ENCODE measurements at regions of chr6 and their contacts with region 1.

Region 1: GRCh38 chr6:37149745-37150144 is 20.2 kb upstream of the PIM1 start:
- DNase-seq: no peak
- H3K4me3 ChIP-seq: no peak overlapping the region
- H3K27ac ChIP-seq: no peak overlapping the region
- H3K27me3 ChIP-seq: no peaks in the 10 kb centered on the region
- CTCF ChIP-seq: no peak

Region 2: DNA sequence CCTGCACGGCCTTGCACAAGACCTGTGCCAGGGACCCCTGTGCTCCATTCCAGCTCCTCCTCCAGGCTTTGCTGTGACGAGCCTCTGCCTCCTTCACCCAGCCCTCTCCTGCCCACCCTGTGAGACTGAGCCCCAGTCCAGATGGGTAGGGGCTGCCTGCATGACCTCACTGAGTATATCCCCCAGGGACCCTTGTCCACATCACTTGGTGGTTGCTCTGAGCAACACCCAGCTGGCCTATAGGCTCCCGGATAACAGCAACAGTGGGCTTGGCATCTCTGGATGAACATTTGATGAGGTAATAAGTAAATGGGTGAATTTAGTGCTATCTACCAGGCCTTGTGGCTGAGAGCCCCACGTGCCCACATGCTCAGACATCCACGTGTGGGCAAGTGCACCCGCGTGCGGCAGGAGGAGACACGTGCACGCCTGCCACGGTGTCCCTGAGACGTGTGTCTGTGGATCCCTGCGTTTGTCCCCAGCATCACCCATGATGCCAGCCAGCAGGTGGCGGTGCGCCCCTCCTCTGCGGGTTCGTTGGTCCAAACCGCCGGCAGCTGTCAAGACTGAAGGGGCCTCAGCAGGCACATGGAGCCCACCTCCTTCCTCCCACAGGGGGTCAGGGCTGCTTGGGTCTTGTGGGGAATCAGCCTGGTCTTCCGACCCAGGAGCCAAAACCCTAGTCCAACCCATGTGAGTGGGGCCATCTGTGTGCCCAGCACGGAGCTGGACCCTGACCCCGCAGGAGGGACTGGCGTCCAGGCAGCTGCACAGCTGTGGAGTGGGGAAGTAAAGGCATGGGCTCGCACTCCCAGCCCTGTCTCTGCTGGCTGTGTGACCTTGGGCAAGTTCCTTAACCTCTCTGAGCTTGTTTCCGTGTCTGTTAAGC is 98.4 kb before region 1 on chr6:
- intact Hi-C with region 1: no loop called
- DNase-seq: peak; percentile 81 to 96 (median 94)
- H3K4me3 ChIP-seq: peak overlapping the region in 20 of 59 donors; percentile 1 to 38 (median 16)
- H3K27ac ChIP-seq: peak overlapping the region in 8 of 59 donors; percentile 3 to 64 (median 34)
- H3K27me3 ChIP-seq: no peaks in the 10 kb centered on the region
- CTCF ChIP-seq: peak; percentile 80 to 99 (median 95)

Region 3: DNA sequence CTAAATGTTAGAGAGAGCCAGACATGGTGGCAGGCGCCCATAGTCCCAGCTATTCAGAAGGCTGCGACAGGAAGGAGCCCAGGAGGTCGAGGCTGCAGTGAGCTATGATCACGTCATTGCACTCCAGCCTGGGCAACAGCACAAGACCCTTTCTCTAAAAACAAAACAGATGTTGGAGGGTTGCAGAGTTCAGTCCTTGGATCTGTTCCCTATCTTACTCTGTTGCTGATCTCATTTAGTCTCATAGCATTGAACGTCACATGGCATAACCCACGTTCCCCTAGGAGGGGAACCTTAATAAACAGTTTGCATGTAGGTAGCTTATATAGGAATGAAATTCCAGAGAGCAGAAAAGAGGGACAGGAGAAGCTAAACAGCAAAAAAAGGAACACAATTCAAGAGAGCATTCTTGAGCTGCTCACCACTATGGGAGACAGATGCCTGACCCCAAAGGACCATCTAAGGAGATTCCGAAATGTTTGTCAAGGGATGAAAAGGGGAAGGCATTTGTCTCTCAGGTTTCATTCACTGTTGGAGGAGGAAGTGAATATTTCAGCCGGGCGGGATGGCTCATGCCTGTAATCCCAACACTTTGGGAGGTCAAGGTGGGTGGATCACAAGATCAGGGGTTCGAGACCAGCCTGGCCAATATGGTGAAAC is 34.4 kb before region 1 on chr6:
- intact Hi-C with region 1: loop called in 1 of 2 experiments (anchors 5 kb)
- DNase-seq: no peak
- H3K4me3 ChIP-seq: no peak overlapping the region
- H3K27ac ChIP-seq: no peak overlapping the region
- H3K27me3 ChIP-seq: no peaks in the 10 kb centered on the region
- CTCF ChIP-seq: no peak

Region 4: GRCh38 chr6:37516076-37516919 is 366.6 kb after region 1 on chr6:
- intact Hi-C with region 1: no loop called
- DNase-seq: peak in 9 of 10 donors; percentile 45 to 78 (median 73)
- H3K4me3 ChIP-seq: peak overlapping the region in 10 of 59 donors; percentile 1 to 20 (median 10)
- H3K27ac ChIP-seq: peak overlapping the region in 55 of 59 donors; percentile 3 to 89 (median 74)
- H3K27me3 ChIP-seq: no peaks in the 10 kb centered on the region
- CTCF ChIP-seq: peak in 6 of 56 donors; percentile 12 to 31 (median 18)

Measured in dorsolateral prefrontal cortex (tissue), 120 donors.